ENCODE measurements at regions of chr11 and their contacts with region 1.

Region 1: DNA sequence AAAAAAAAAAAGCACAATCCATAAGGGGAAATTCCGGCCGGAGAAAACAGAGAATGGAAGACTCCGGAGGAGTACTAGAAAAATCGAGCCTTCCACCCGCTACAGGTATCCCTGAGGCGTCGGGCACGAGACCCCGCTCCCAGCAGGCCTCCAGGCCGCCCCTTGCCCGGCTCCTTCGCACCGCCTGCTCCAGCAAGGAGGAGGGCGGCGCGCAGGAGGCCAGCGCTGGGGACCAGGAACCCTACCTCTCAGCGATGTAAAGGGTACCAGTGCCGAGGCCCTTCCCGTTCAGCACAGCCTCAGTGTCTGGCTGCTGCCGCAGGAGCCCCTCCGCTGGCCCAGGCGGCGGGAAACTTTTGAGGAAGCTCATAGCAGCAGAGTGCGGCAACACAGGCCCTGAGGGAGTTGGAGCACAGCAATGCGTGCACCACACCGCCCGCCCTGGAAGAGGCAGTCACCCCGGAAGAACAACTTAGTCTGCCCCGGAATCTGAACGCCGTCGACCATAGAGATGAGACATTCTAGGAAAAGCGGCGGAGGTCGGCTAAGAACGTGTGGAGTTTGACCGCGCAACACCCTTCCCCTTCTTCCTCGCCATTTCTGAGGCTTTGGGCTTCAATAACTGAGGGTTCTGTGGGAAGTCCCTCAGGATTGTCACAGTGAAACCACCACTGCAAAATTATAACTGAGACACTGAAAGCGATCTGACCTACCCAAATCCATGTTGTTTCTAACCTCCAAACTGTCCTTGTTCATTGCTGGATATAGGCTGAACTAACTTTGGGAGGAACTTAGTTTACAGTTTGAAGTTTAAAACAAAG is at the start of gene CLNS1A:
- DNase-seq: peak; percentile 93
- ATAC-seq: peak; percentile 99
- H3K4me3 ChIP-seq: peak within 1 kb of the TSS; percentile 85
- H3K27ac ChIP-seq: peak within 1 kb of the TSS; percentile 64
- H3K4me1 ChIP-seq: peaks cover 19% of the 10 kb centered on the region
- H3K27me3 ChIP-seq: no peaks in the 10 kb centered on the region
- CTCF ChIP-seq: no peak
- total RNA-seq, gene CLNS1A: 302 and 361 TPM in 2 replicates

Region 2: GRCh38 chr11:77287615-77288273 is 349.8 kb before region 1 on chr11:
- CTCF ChIA-PET with region 1: no interaction called
- POLR2A ChIA-PET with region 1: no interaction called
- intact Hi-C with region 1: no loop called
- DNase-seq: peak; percentile 87
- ATAC-seq: peak; percentile 99
- H3K4me3 ChIP-seq: peak overlapping the region; percentile 39; the same call in 1 of the 2 replicates
- H3K27ac ChIP-seq: peak overlapping the region; percentile 61
- H3K4me1 ChIP-seq: peaks cover 17% of the 10 kb centered on the region
- H3K27me3 ChIP-seq: no peaks in the 10 kb centered on the region
- CTCF ChIP-seq: no peak

Region 3: GRCh38 chr11:77672264-77672663 is 34.7 kb after region 1 on chr11:
- CTCF ChIA-PET with region 1: no interaction called
- POLR2A ChIA-PET with region 1: no interaction called
- intact Hi-C with region 1: loop called (anchors 1 kb)
- DNase-seq: peak; percentile 85
- ATAC-seq: peak; percentile 98
- H3K4me3 ChIP-seq: no peak overlapping the region
- H3K27ac ChIP-seq: peak overlapping the region; percentile 50
- H3K4me1 ChIP-seq: peaks cover 31% of the 10 kb centered on the region
- H3K27me3 ChIP-seq: no peaks in the 10 kb centered on the region
- CTCF ChIP-seq: no peak

Region 4: DNA sequence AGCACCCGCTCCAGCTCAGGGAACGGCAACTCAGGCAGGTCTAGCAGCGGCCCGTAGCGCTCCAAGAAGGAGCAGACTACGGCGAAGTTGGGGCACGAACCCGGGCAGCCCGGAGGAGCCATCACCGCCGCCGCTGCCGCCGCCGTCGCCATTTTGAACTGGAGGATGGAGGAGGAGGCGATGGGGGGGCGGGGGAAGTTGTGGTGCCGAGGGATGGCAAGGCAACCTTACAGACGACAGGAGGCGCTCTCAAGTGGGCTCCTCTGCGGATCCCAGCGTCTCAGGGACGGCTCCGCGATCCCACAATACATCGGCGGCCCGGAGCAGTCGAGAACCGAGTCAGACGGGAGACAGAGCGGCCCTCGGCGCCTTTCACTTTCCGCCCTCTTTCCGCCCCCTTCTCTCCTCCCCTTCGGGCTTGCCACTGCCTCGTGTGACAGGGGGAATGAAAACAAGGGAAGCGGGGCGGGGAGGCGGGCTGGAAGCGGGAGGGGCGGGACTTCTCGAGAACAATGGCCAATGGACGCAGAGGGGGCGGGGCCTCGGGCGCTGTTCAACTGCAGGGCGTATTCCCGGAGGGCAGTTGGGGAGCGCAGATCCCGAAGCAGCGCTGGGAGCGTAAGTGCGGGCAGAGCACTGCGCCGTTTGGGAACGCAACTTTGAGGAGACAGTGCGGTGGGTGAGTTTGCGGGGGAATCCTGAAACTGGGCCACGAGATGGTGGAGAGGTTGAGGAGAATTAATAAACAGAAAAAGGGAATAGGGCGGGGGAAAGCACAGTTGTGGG is 183.2 kb after region 1 on chr11 and contains the starts of genes AAMDC and RSF1:
- CTCF ChIA-PET with region 1: no interaction called
- POLR2A ChIA-PET with region 1: no interaction called
- intact Hi-C with region 1: loop called (anchors 1 kb)
- DNase-seq: peak; percentile 98
- ATAC-seq: peak; percentile 80
- H3K4me3 ChIP-seq: peak within 1 kb of the TSS; percentile 97
- H3K27ac ChIP-seq: peak within 1 kb of the TSS; percentile 34
- H3K4me1 ChIP-seq: peaks cover 17% of the 10 kb centered on the region; the same call in 1 of the 2 replicates
- H3K27me3 ChIP-seq: no peaks in the 10 kb centered on the region
- CTCF ChIP-seq: peak; percentile 61
- total RNA-seq, gene AAMDC: 14.4 and 18.0 TPM in 2 replicates
- total RNA-seq, gene RSF1: 30.0 and 58.7 TPM in 2 replicates